T-cell (primary cell): ENCODE measurements at regions of chr14 and their contacts with region 1.

Region 1: GRCh38 chr14:34982417-34983147 is at the start of gene SRP54:
- DNase-seq: peak; percentile 96 to 100 (median 100)
- ATAC-seq: peak; percentile 92 to 95 (median 94)
- H3K4me3 ChIP-seq: peak within 1 kb of the TSS; percentile 66 to 82
- H3K4me3 Mint-ChIP-seq: no peak within 1 kb of the TSS
- H3K27ac ChIP-seq: peak within 1 kb of the TSS; percentile 98
- H3K27ac Mint-ChIP-seq: no peak within 1 kb of the TSS
- H3K4me1 ChIP-seq: peaks cover 27 to 28% of the 10 kb centered on the region in 2 experiments
- H3K4me1 Mint-ChIP-seq: peaks cover 19 to 21% (median 20%) of the 10 kb centered on the region in 3 donors
- H3K27me3 ChIP-seq: no peaks in the 10 kb centered on the region
- H3K27me3 Mint-ChIP-seq: no peaks in the 10 kb centered on the region
- total RNA-seq, gene SRP54: 41.5 to 55.4 (median 41.9) TPM

Region 2: GRCh38 chr14:34875031-34875922 is 107.3 kb before region 1 on chr14 and contains the start of gene BAZ1A:
- CTCF ChIA-PET with region 1: interaction called in 1 of 2 experiments, 4 read pairs
- POLR2A ChIA-PET with region 1: interaction called, 4 to 34 read pairs
- DNase-seq: peak in 30 of 35 experiments; percentile 1 to 69 (median 13)
- ATAC-seq: peak; percentile 24 to 33 (median 28)
- H3K4me3 ChIP-seq: peak within 1 kb of the TSS; percentile 92 to 94
- H3K4me3 Mint-ChIP-seq: peak within 1 kb of the TSS; percentile 99 to 100 (median 99)
- H3K27ac ChIP-seq: peak within 1 kb of the TSS; percentile 100
- H3K27ac Mint-ChIP-seq: peak within 1 kb of the TSS; percentile 98 to 99
- H3K4me1 ChIP-seq: peaks cover 11 to 19% of the 10 kb centered on the region in 2 experiments
- H3K4me1 Mint-ChIP-seq: peaks cover 33 to 38% (median 37%) of the 10 kb centered on the region in 3 donors
- H3K27me3 ChIP-seq: no peaks in the 10 kb centered on the region
- H3K27me3 Mint-ChIP-seq: no peaks in the 10 kb centered on the region
- total RNA-seq, gene BAZ1A: 38.0 to 56.2 (median 44.6) TPM

Region 3: GRCh38 chr14:34931206-34931605 is 51.4 kb before region 1 on chr14:
- CTCF ChIA-PET with region 1: interaction called in 1 of 2 experiments, 8 read pairs
- POLR2A ChIA-PET with region 1: interaction called, 3 to 18 read pairs
- DNase-seq: peak; percentile 2 to 79 (median 31)
- ATAC-seq: peak; percentile 87 to 95 (median 92)
- H3K4me3 ChIP-seq: no peak overlapping the region
- H3K4me3 Mint-ChIP-seq: peak overlapping the region; percentile 37 to 79 (median 68)
- H3K27ac ChIP-seq: peak overlapping the region; percentile 95
- H3K27ac Mint-ChIP-seq: peak overlapping the region; percentile 99 to 100
- H3K4me1 ChIP-seq: peaks cover 11 to 26% of the 10 kb centered on the region in 2 experiments
- H3K4me1 Mint-ChIP-seq: peaks cover 28 to 35% (median 34%) of the 10 kb centered on the region in 3 donors
- H3K27me3 ChIP-seq: no peaks in the 10 kb centered on the region
- H3K27me3 Mint-ChIP-seq: no peaks in the 10 kb centered on the region

Region 4: GRCh38 chr14:35046048-35046741 is 63.6 kb after region 1 on chr14 and contains the start of gene FAM177A1:
- CTCF ChIA-PET with region 1: interaction called in 1 of 2 experiments, 15 read pairs
- POLR2A ChIA-PET with region 1: interaction called, 4 to 58 read pairs
- DNase-seq: peak; percentile 93 to 100 (median 100)
- ATAC-seq: peak; percentile 83 to 93 (median 91)
- H3K4me3 ChIP-seq: peak within 1 kb of the TSS; percentile 71 to 91
- H3K4me3 Mint-ChIP-seq: peak within 1 kb of the TSS; percentile 73 to 88 (median 85)
- H3K27ac ChIP-seq: peak within 1 kb of the TSS; percentile 99
- H3K27ac Mint-ChIP-seq: peak within 1 kb of the TSS; percentile 95 to 96
- H3K4me1 ChIP-seq: peaks cover 4 to 12% of the 10 kb centered on the region in 2 experiments
- H3K4me1 Mint-ChIP-seq: peaks cover 25 to 31% (median 27%) of the 10 kb centered on the region in 3 donors
- H3K27me3 ChIP-seq: no peaks in the 10 kb centered on the region
- H3K27me3 Mint-ChIP-seq: no peaks in the 10 kb centered on the region
- total RNA-seq, gene FAM177A1: 35.7 to 141 (median 38.7) TPM

Region 5: DNA sequence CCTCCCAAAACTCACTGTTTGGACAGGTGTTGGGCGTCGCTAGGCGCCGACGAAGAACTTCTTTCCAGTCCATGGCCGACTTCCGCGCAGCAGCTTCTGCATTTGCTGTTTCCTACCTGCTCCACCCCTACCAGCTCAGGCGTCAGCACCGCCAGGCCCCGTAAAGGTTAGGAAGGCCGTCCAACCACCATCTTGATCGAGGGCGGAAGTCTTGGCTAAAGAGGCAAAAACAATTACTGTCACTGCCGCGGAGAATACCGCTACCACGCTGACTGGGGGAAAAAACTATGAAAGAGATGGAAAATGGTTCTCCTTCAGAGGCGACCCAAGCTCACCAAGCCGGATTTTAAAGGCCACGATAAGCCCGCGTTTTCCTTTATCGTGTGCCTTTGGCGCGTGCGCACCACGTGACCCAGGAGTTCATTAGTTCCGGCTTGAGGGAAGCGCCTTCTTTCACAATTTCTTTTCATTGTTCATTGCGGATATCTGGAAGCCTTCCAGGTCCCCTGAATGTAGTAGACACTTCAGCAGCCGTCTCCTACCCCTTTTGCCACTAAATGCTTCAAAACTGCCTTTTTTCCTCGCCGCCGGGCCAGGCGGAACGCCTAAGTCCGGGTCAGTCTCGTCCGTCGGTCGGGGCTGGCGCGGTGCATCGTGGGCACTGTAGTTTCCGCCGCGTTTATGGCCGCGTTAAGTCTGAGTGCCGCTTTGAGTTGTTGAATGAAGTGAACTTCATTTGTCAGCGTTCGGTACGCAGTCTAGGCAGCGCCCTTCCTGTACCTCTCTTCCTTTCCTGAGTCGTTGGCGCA is 139.5 kb after region 1 on chr14 and contains the starts of genes PPP2R3C and PRORP:
- CTCF ChIA-PET with region 1: interaction called in 1 of 2 experiments, 12 read pairs
- POLR2A ChIA-PET with region 1: interaction called in 1 of 2 experiments, 5 read pairs
- DNase-seq: peak; percentile 76 to 94 (median 92)
- ATAC-seq: peak; percentile 84 to 91 (median 86)
- H3K4me3 ChIP-seq: peak within 1 kb of the TSS; percentile 92 to 94
- H3K4me3 Mint-ChIP-seq: peak within 1 kb of the TSS; percentile 98 to 99 (median 98)
- H3K27ac ChIP-seq: peak within 1 kb of the TSS; percentile 99
- H3K27ac Mint-ChIP-seq: peak within 1 kb of the TSS; percentile 100
- H3K4me1 ChIP-seq: peaks cover 15 to 46% of the 10 kb centered on the region in 2 experiments
- H3K4me1 Mint-ChIP-seq: peaks cover 74 to 78% (median 75%) of the 10 kb centered on the region in 3 donors
- H3K27me3 ChIP-seq: no peaks in the 10 kb centered on the region
- H3K27me3 Mint-ChIP-seq: no peaks in the 10 kb centered on the region
- total RNA-seq, gene PPP2R3C: 28.1 to 40.5 (median 32.9) TPM
- total RNA-seq, gene PRORP: 31.9 to 43.3 (median 35.9) TPM